ENCODE measurements at regions of chr5 and their contacts with region 1.

Region 1: DNA sequence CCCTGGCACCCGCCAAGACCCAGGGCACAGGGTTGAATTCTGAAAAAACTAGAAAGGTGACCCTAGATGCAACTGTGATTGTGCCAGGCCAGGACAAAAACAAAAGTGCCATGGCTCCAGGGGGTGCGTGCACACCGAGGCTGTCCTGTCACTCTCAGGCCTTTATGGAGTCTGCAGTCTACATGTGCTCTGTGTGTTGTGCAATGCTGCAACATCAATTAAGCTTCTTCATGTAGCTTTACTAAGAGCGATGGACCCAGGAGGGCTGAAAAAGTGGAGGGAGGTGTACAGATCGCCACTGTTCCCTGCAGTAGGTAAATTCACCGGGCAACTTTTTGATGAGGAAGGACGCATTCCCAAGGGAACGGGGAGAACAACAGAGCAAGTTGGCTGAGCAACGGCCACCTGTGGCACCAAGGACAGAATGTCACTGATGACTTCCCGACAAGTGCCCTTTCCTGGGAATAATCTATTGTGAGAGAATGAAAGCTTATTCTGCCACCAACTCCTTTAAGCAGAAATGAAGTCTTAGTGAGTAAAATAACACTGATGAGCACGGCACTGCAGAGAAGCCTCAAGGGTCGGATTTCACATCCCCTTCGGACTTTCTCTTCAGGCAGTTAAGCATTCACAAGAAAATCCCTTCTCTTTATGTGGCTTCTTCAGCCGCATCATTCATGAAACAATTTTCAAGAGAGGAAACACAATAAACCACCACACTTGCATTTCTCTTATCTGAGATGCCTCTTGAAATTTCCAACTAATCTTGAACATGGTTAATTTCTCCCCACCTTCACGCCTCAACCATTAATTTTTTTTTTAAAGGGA is 149.6 kb downstream of the DROSHA start:
- DNase-seq: no peak
- H3K4me3 Mint-ChIP-seq: no peak overlapping the region
- H3K27ac Mint-ChIP-seq: no peak overlapping the region
- H3K4me1 Mint-ChIP-seq: peaks cover 5% of the 10 kb centered on the region
- H3K27me3 Mint-ChIP-seq: no peaks in the 10 kb centered on the region
- CTCF ChIP-seq: no peak

Region 2: DNA sequence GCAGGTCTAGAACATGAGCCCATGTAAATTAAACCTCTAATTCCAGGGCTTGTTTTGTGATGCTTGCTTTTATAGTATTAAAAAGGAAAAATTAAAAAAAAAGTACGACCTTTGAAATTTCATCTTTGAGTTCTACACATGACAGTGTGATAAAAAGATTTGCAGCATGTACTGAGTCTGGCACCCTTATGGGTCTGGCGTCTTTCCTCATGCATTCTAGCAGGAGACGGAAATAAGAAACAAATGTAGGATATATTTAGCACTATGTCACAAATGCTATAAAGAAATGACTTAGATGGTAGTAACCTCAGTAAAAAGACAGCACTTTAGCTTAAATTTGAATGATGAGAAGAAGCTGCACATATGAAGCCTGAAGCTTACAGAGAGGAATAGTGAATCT is 1663.1 kb before region 1 on chr5:
- CTCF ChIA-PET with region 1: no interaction called
- POLR2A ChIA-PET with region 1: no interaction called
- intact Hi-C with region 1: loop called (anchors 10 kb)
- DNase-seq: no peak
- H3K4me3 Mint-ChIP-seq: no peak overlapping the region
- H3K27ac Mint-ChIP-seq: no peak overlapping the region
- H3K4me1 Mint-ChIP-seq: no peaks in the 10 kb centered on the region
- H3K27me3 Mint-ChIP-seq: no peaks in the 10 kb centered on the region
- CTCF ChIP-seq: no peak

Measured in MCF 10A (cell line).